AG04450 (cell line): ENCODE measurements at regions of chr17 and their contacts with region 1.

Region 1: DNA sequence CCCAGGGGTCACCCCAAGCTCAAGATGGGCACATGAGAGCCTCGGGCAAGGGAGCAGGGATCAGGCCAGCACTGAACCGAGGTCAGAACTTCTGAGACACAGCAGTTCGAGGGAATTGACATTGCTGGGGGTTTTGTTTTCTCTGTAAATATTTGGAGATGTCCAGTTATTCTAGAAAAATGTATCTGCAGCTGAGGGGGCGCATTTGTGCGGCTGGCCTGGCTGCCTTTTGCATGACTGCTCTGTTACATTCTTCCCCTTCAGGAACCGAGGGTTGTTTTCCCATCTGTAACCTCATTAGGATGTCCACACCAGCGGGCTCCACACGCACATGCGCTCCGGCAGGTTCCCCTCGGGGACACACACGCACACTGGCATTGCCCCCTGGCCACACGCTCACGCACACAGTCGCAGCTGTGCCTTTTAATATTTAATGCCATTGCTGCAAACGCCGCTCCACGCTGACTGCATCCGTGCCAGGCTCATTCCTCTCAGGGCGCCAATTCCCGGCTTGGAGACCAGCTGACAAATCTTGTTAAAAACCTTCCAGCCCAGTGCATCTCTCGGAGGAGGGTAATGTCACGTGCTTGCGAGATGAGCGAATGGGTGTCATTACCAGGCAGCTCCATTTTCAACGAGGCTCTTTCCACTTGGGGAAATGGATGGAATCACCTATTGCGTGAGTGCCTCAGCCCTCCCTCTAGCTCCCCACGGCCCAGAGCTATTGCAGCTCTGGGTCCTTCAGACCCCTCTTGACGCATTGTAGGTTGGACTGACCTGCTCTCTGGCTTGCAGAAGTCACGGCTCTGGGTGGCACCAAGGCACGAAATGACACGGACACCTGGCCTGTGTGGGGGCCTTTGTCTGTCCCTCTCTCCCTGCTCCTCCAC is 13.1 kb downstream of the CCR7 start:
- DNase-seq: peak; percentile 95
- H3K4me3 ChIP-seq: peak overlapping the region; percentile 38; the same call in 1 of the 2 replicates
- H3K27ac ChIP-seq: peak overlapping the region; percentile 100
- H3K27me3 ChIP-seq: no peaks in the 10 kb centered on the region
- CTCF ChIP-seq: no peak

Region 2: GRCh38 chr17:40457964-40458791 is 93.9 kb before region 1 on chr17:
- CTCF ChIA-PET with region 1: no interaction called
- POLR2A ChIA-PET with region 1: interaction called, 11 read pairs
- DNase-seq: peak; percentile 67
- H3K4me3 ChIP-seq: no peak overlapping the region
- H3K27ac ChIP-seq: peak overlapping the region; percentile 71
- H3K27me3 ChIP-seq: no peaks in the 10 kb centered on the region
- CTCF ChIP-seq: no peak

Region 3: GRCh38 chr17:40490289-40490853 is 61.8 kb before region 1 on chr17:
- CTCF ChIA-PET with region 1: interaction called, 3 read pairs
- POLR2A ChIA-PET with region 1: interaction called, 23 read pairs
- DNase-seq: peak; percentile 59
- H3K4me3 ChIP-seq: no peak overlapping the region
- H3K27ac ChIP-seq: peak overlapping the region; percentile 57
- H3K27me3 ChIP-seq: no peaks in the 10 kb centered on the region
- CTCF ChIP-seq: no peak

Region 4: DNA sequence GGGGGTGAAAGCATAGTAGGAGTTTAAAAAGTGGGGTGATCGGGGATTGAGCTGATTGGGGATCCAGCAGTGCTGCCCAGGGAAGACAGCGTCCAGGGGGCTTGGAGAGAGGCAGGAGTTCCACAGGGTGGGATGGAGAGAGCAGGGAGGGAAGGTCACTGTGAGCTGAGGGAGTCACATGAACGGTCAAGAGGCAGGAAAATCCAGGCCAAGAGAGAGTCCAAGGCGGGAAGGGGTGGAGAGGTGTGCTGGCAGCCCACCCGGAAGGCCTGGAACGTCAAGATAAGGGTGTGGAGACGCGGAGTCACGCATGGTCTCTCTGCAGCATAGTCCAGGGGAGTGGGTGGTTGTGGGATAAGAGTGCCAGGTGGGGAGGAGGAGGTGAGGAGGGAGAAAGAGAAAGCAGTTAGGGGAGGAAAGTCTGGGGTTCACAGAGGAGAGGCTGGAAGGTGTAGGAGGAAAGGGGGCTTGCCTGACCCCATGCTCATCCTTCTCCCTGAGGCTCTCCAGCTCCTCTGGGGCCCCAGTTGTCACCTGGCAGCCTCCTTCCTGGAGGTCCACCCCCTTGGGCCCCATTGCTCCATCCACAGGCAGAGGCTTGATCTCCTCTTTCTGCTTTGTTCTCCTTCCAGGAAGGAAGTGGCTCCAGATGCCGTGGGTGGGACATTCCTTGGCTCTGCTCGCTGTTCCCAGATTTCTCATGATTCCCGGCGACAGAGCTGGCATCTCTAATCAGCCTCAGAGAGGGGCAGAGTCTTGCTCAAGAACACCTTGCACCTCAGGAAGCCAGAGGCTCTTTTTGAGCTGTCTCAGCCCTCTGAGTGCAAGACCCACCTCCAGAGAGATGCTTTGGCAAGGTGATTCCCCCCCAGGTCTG is 15.6 kb before region 1 on chr17:
- CTCF ChIA-PET with region 1: interaction called, 174 read pairs
- POLR2A ChIA-PET with region 1: interaction called, 64 read pairs
- DNase-seq: no peak
- H3K4me3 ChIP-seq: no peak overlapping the region
- H3K27ac ChIP-seq: peak overlapping the region; percentile 47
- H3K27me3 ChIP-seq: no peaks in the 10 kb centered on the region
- CTCF ChIP-seq: no peak